PC-3 (cell line): ENCODE measurements at regions of chr12 and their contacts with region 1.

Region 1: GRCh38 chr12:46549527-46550265 is 177.1 kb upstream of the SLC38A2 start:
- DNase-seq: peak; percentile 87
- ATAC-seq: peak; percentile 72
- H3K4me3 ChIP-seq: no peak overlapping the region
- H3K27ac ChIP-seq: peak overlapping the region; percentile 94
- H3K4me1 ChIP-seq: peaks cover 82% of the 10 kb centered on the region
- H3K27me3 ChIP-seq: no peaks in the 10 kb centered on the region
- CTCF ChIP-seq: no peak

Region 2: GRCh38 chr12:46523863-46524770 is 25.6 kb before region 1 on chr12:
- CTCF ChIA-PET with region 1: no interaction called
- POLR2A ChIA-PET with region 1: interaction called, 7 read pairs
- intact Hi-C with region 1: loop called (anchors 1 kb)
- DNase-seq: peak; percentile 97
- ATAC-seq: peak; percentile 90
- H3K4me3 ChIP-seq: peak overlapping the region; percentile 61
- H3K27ac ChIP-seq: peak overlapping the region; percentile 75
- H3K4me1 ChIP-seq: peaks cover 36% of the 10 kb centered on the region
- H3K27me3 ChIP-seq: no peaks in the 10 kb centered on the region
- CTCF ChIP-seq: no peak